ENCODE measurements at regions of chr17 and their contacts with region 1.

Region 1: DNA sequence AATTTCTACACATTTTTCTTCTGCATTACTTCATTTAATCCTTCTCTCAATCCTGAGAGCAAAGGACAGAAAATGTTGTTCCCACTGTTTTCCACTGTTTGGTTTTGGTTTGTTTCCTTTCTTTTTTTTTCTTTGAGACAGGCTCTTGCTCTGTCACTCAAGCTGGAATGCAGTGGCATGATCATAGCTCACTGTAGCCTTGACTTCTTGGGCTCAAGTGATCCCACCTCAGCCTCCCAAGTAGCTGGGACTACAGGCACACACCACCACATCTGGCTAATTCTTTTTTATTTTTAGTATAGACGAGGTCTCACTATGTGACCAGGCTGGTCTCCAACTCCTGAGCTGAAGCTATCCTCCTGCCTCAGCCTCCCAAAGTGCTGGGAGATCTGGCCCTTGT is 7.0 kb upstream of the ZNF652 start:
- DNase-seq: no peak
- H3K4me3 ChIP-seq: no peak overlapping the region
- H3K4me3 Mint-ChIP-seq: no peak overlapping the region
- H3K27ac ChIP-seq: no peak overlapping the region
- H3K27ac Mint-ChIP-seq: no peak overlapping the region
- H3K4me1 ChIP-seq: peaks cover 14% of the 10 kb centered on the region
- H3K4me1 Mint-ChIP-seq: peaks cover 10 to 19% (median 18%) of the 10 kb centered on the region in 4 donors
- H3K27me3 ChIP-seq: no peaks in the 10 kb centered on the region
- H3K27me3 Mint-ChIP-seq: no peaks in the 10 kb centered on the region

Region 2: DNA sequence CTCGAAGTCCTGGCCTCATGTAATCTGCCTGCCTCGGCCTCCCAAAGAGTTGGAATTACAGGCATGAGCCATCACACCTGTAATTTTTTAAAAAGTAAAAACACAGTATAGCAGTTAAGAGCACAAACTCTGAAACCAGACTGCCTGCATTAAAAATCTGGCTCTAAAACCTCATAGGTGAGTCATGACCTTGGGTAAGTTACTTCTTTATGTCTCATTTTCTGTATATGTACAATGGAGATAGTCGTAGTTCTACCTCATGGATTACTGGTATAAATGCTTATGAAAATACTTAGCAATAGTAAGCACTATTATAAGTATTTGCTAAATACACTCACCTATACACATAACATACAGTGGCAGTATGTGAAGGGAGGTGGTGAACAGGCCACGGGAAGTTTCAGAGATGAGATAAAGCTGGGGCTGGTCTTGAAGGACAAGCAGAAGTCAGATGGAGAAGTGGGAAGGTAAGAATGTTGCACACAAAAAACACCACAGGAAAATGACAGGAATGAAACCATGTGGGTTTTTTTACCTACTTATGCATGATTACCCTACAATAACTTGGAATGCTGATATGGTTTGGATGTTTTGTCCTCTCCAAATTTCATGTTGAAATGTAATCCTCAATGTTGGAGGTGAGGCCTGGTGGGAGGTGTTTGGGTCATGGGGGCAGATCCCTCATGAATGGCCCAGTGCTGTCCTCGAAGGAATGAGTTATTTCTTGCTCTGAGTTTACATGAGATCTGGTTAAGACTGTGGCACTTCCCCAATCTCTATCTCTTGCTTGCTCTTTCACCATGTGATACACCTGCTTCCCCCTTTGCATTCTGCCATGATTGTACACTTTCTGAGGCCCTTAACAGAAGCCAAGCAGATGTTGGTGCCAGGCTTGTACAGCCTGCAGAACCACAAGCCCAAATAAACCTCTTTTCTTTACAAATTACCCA is 41.0 kb before region 1 on chr17:
- CTCF ChIA-PET with region 1: interaction called, 13 read pairs
- POLR2A ChIA-PET with region 1: no interaction called
- intact Hi-C with region 1: no loop called
- DNase-seq: no peak
- H3K4me3 ChIP-seq: no peak overlapping the region
- H3K4me3 Mint-ChIP-seq: peak overlapping the region in 4 of 8 donors; percentile 4 to 35 (median 20)
- H3K27ac ChIP-seq: no peak overlapping the region
- H3K27ac Mint-ChIP-seq: peak overlapping the region; percentile 10 to 90 (median 60)
- H3K4me1 ChIP-seq: peaks cover 26% of the 10 kb centered on the region
- H3K4me1 Mint-ChIP-seq: peaks cover 37 to 63% (median 51%) of the 10 kb centered on the region in 4 donors
- H3K27me3 ChIP-seq: no peaks in the 10 kb centered on the region
- H3K27me3 Mint-ChIP-seq: no peaks in the 10 kb centered on the region

Region 3: DNA sequence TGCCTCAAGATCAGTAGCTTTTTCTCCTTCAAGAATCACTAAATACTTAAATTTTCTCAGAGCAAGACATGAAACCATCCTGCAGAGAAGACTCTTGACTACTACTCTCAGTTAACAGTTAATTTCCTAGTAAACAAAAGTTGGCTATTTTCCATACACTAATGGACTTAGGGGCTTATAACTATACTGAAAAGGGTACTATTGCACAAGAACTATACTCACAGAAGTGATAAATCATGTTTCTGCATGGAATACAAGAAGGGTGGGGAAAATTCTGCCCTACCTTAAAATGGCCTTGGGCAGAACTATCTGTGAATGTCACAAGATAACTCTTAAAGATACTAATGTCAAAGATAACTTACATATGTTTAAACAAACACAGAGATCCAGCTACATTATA is 19.6 kb before region 1 on chr17:
- CTCF ChIA-PET with region 1: interaction called, 69 read pairs
- POLR2A ChIA-PET with region 1: interaction called, 3 read pairs
- intact Hi-C with region 1: no loop called
- DNase-seq: no peak
- H3K4me3 ChIP-seq: no peak overlapping the region
- H3K4me3 Mint-ChIP-seq: no peak overlapping the region
- H3K27ac ChIP-seq: no peak overlapping the region
- H3K27ac Mint-ChIP-seq: no peak overlapping the region
- H3K4me1 ChIP-seq: peaks cover 68% of the 10 kb centered on the region
- H3K4me1 Mint-ChIP-seq: peaks cover 28 to 70% (median 44%) of the 10 kb centered on the region in 4 donors
- H3K27me3 ChIP-seq: no peaks in the 10 kb centered on the region
- H3K27me3 Mint-ChIP-seq: no peaks in the 10 kb centered on the region

Region 4: GRCh38 chr17:49422714-49423113 is 53.6 kb after region 1 on chr17:
- CTCF ChIA-PET with region 1: no interaction called
- POLR2A ChIA-PET with region 1: no interaction called
- intact Hi-C with region 1: no loop called
- DNase-seq: no peak
- H3K4me3 ChIP-seq: no peak overlapping the region
- H3K4me3 Mint-ChIP-seq: no peak overlapping the region
- H3K27ac ChIP-seq: no peak overlapping the region
- H3K27ac Mint-ChIP-seq: no peak overlapping the region
- H3K4me1 ChIP-seq: no peaks in the 10 kb centered on the region
- H3K4me1 Mint-ChIP-seq: no peaks in the 10 kb centered on the region
- H3K27me3 ChIP-seq: no peaks in the 10 kb centered on the region
- H3K27me3 Mint-ChIP-seq: peaks cover 13 to 25% of the 10 kb centered on the region in 2 donors